Posterior vena cava (tissue), 2 donors: ENCODE measurements at regions of chr2 and their contacts with region 1.

Region 1: DNA sequence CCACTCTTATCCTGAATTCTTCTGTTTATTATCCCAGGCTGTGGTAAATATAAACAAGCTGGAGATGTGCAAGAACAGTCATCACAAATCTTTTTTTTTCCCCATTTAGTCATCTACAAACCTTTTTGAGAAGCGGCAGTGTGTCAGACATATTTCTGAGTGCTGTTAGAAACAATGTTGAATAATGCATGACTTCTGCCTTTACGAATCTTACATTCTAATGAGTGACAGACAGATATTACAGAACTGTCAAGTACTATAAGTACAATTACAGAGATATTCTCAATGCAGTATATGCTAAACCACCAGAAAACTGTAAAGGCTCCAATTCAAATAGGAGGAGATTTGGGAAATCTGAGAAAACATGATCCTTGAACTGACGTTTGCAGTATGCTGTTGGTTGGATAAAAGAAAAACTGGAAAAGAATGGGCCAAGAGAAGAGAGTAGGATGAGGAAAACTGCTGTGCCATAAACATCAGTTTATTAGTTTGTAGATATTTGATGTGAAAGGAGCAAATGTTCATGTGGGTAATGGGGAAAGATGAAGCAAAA is 379.5 kb upstream of the SLC8A1 start:
- DNase-seq: no peak

Region 2: GRCh38 chr2:40639320-40639719 is 192.1 kb before region 1 on chr2:
- intact Hi-C with region 1: no loop called
- DNase-seq: no peak

Region 3: GRCh38 chr2:41314511-41315070 is 483.2 kb after region 1 on chr2:
- intact Hi-C with region 1: loop called in 1 of 2 experiments (anchors 5 kb)
- DNase-seq: no peak